ENCODE measurements at regions of chr11 and their contacts with region 1.

Region 1: DNA sequence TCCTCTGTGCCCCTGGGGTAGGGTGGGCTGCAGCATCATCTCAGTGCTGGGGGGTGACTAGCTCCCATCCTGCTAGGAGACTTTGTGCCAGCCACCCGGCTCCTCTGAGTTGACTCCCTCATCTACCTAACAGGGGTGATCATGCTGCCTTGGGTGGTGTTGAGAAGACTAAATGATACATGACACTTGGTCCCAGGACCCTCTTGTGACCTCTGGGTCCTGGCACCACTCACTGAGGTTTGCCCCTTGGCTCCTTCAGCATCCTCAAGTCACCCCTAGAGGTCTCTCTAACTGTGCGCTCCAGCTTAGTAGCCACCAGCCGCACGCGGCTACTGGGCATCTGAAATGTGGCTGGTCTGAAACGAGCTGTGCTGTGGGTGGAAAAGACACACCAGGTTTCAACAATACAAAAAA is 72.1 kb downstream of the LRRC32 start:
- DNase-seq: peak in 1 of 10 donors; percentile 42
- H3K4me3 ChIP-seq: no peak overlapping the region
- H3K27ac ChIP-seq: no peak overlapping the region
- H3K27me3 ChIP-seq: no peaks in the 10 kb centered on the region
- CTCF ChIP-seq: peak in 41 of 56 donors; percentile 12 to 62 (median 34)

Region 2: GRCh38 chr11:76680518-76681425 is 82.3 kb after region 1 on chr11:
- intact Hi-C with region 1: loop called in 1 of 2 experiments (anchors 5 kb)
- DNase-seq: peak in 8 of 10 donors; percentile 39 to 74 (median 61)
- H3K4me3 ChIP-seq: peak overlapping the region in 9 of 59 donors; percentile 9 to 46 (median 30)
- H3K27ac ChIP-seq: no peak overlapping the region
- H3K27me3 ChIP-seq: peaks cover 0 to 4% (median 0%) of the 10 kb centered on the region in 45 donors
- CTCF ChIP-seq: peak; percentile 24 to 89 (median 74)

Measured in dorsolateral prefrontal cortex (tissue), 120 donors.